PC-3 (cell line): ENCODE measurements at regions of chr3 and their contacts with region 1.

Region 1: GRCh38 chr3:140972833-140973232 is 31.2 kb downstream of the SLC25A36 start:
- DNase-seq: peak; percentile 22
- ATAC-seq: peak; percentile 59; the same call in 1 of the 2 replicates
- H3K4me3 ChIP-seq: no peak overlapping the region
- H3K27ac ChIP-seq: no peak overlapping the region
- H3K4me1 ChIP-seq: no peaks in the 10 kb centered on the region
- H3K27me3 ChIP-seq: no peaks in the 10 kb centered on the region
- CTCF ChIP-seq: peak; percentile 53; the same call in 1 of the 2 replicates

Region 2: GRCh38 chr3:140898340-140899180 is 74.3 kb before region 1 on chr3:
- CTCF ChIA-PET with region 1: no interaction called
- POLR2A ChIA-PET with region 1: no interaction called
- intact Hi-C with region 1: loop called (anchors 1 kb)
- DNase-seq: peak; percentile 65
- ATAC-seq: peak; percentile 76
- H3K4me3 ChIP-seq: no peak overlapping the region
- H3K27ac ChIP-seq: no peak overlapping the region
- H3K4me1 ChIP-seq: no peaks in the 10 kb centered on the region
- H3K27me3 ChIP-seq: 0 out of 2 replicates have a peak, but pooled peaks cover under 1% of the 10 kb centered on the region
- CTCF ChIP-seq: peak; percentile 65

Region 3: DNA sequence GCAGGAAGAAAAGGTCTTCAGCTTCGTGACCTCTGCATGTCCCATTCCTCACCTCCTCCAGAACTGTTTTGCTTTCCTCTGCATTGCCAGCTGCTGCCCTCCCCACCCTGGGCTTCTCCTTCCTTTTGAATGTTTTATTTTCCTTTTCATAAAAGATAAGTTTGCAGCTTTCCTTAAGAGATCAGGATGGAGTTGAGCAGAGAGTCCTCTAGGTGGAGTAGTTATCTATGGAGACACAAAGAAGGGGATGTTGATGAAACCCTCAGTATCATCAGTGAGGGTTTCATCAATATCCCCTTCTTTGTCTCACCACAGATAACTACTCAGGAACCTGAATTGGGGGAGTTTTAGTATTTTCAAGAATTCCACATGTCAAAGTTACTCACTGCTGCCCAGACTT is 50.2 kb before region 1 on chr3:
- CTCF ChIA-PET with region 1: no interaction called
- POLR2A ChIA-PET with region 1: no interaction called
- intact Hi-C with region 1: loop called (anchors 1 kb)
- DNase-seq: peak; percentile 39
- ATAC-seq: peak; percentile 73
- H3K4me3 ChIP-seq: no peak overlapping the region
- H3K27ac ChIP-seq: no peak overlapping the region
- H3K4me1 ChIP-seq: no peaks in the 10 kb centered on the region
- H3K27me3 ChIP-seq: 0 out of 2 replicates have a peak, but pooled peaks cover 3% of the 10 kb centered on the region
- CTCF ChIP-seq: peak; percentile 59

Region 4: GRCh38 chr3:140941434-140942220 is 31.2 kb before region 1 on chr3 and contains the start of gene SLC25A36:
- CTCF ChIA-PET with region 1: no interaction called
- POLR2A ChIA-PET with region 1: no interaction called
- intact Hi-C with region 1: loop called (anchors 2 kb)
- DNase-seq: peak; percentile 96
- ATAC-seq: peak; percentile 93
- H3K4me3 ChIP-seq: peak within 1 kb of the TSS; percentile 92
- H3K27ac ChIP-seq: peak within 1 kb of the TSS; percentile 49; the same call in 1 of the 2 replicates
- H3K4me1 ChIP-seq: peaks cover 13% of the 10 kb centered on the region; the same call in 1 of the 2 replicates
- H3K27me3 ChIP-seq: no peaks in the 10 kb centered on the region
- CTCF ChIP-seq: no peak
- total RNA-seq, gene SLC25A36: 41.7 and 57.3 TPM in 2 replicates